Activated CD4-positive, alpha-beta T cell treated with anti-CD3 and anti-CD28 coated beads, Interleukin-2, amount 10 ng/mL, durations not matched to agents 24 days and 14 days (primary cell): ENCODE measurements at regions of chr2 and their contacts with region 1.

Region 1: GRCh38 chr2:73926493-73927338 is at the start of gene DGUOK:
- DNase-seq: peak; percentile 99
- H3K4me3 Mint-ChIP-seq: peak within 1 kb of the TSS; percentile 93
- H3K27ac Mint-ChIP-seq: peak within 1 kb of the TSS; percentile 96
- H3K4me1 Mint-ChIP-seq: peaks cover 50% of the 10 kb centered on the region
- H3K27me3 Mint-ChIP-seq: no peaks in the 10 kb centered on the region
- total RNA-seq, gene DGUOK: 88.9 and 94.9 TPM in 2 replicates

Region 2: DNA sequence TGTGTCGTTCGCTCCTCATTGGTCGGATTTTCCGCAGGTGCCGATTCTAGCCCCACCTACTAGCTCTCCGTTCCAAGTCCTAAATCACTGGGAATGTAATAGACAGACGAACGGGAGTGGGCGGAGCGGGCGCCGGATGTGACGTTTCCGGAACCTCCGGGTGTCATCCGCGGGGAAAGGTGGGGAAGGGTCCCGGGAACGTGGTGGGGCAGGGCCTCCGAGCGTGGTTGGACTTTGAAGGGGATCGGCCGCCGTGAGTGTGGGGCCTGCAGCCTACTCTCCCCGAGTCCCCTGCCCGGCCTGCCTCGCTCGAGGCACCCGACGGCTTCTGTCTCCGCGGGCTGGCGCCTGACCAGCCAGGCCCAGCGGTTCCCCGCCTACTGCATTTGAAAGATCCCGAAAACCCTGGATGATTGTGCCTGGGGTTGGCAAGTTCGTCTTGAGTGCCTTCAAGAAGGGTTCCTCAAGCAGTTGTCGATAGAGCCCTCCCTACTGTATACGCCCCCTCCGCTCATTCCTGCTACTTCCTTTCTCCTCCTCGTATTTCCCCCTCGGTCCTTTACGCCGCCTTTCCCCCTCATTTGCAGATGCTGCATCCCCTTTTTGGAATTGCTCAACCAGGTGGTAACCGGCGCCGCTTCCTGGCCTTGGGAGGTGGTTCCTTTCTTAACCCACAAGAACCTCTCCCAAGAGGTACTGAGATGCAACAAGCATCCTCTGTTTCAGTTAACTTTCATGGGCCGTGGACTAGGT is 97.7 kb before region 1 on chr2 and contains the start of gene STAMBP:
- intact Hi-C with region 1: loop called (anchors 1 kb)
- DNase-seq: peak; percentile 98
- H3K4me3 Mint-ChIP-seq: peak within 1 kb of the TSS; percentile 97
- H3K27ac Mint-ChIP-seq: peak within 1 kb of the TSS; percentile 96
- H3K4me1 Mint-ChIP-seq: peaks cover 44% of the 10 kb centered on the region
- H3K27me3 Mint-ChIP-seq: peaks cover 2% of the 10 kb centered on the region
- total RNA-seq, gene STAMBP: 58.4 and 59.9 TPM in 2 replicates

Region 3: DNA sequence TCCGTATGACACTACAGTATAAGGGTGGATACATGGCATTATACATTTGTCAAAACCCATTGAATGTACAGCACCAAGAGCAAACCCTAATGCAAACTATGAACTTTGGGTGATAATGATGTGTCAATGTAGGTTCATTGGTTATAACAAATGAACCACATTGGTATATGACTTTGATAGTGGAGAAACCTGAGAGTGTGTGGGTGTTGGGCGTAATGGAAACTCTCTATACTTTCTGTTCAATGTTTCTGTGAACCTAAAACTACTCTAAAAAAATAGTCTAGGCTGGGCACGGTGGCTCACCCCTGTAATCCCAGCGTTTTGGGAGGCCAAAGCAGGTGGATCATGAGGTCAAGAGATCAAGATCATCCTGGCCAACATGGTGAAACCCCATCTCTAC is 40.4 kb before region 1 on chr2:
- intact Hi-C with region 1: loop called (anchors 2 kb)
- DNase-seq: no peak
- H3K4me3 Mint-ChIP-seq: peak overlapping the region; percentile 12
- H3K27ac Mint-ChIP-seq: peak overlapping the region; percentile 82
- H3K4me1 Mint-ChIP-seq: peaks cover 24% of the 10 kb centered on the region
- H3K27me3 Mint-ChIP-seq: peaks cover 3% of the 10 kb centered on the region

Region 4: DNA sequence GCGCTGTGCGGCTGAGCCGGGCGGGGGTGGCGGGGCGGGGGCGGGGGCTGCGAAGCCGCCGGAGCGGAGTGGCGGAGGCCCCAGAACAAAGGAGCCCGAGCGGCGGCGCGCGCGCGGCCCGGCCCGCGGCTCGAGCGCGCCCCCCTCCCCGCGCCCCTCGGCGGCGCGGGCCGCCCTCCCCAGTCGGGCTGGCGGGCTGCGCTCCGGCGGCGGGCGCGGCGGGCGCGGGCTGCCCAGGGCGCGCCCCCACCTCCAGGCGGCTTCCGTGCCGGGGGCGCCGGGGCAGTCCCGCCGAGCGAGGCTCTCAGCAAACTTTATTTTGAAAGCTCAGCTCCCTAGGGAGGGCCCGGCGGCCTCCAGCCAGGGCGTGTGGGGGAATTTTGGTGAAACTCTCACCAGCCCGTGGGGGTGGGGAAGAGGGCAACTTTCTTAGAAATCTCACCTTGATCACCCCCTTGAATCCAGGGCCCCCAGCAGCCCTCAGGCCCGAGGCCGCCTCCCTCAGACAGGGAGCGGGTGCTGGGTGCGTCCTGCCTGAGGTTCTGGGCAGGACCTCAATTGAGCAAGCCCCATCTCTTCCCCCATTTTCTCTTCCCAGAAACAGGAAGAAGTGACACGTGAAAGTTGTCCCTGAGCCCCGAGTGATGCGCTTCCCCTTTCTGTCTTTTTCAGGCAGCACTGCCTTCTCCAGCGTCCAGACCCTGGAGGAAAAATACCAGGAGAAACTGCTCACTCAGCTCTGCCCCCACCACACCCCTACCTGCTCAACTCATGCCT is 58.8 kb after region 1 on chr2:
- intact Hi-C with region 1: loop called (anchors 1 kb)
- DNase-seq: peak; percentile 83
- H3K4me3 Mint-ChIP-seq: peak overlapping the region; percentile 87
- H3K27ac Mint-ChIP-seq: peak overlapping the region; percentile 88
- H3K4me1 Mint-ChIP-seq: peaks cover 73% of the 10 kb centered on the region
- H3K27me3 Mint-ChIP-seq: peaks cover 9% of the 10 kb centered on the region

Region 5: DNA sequence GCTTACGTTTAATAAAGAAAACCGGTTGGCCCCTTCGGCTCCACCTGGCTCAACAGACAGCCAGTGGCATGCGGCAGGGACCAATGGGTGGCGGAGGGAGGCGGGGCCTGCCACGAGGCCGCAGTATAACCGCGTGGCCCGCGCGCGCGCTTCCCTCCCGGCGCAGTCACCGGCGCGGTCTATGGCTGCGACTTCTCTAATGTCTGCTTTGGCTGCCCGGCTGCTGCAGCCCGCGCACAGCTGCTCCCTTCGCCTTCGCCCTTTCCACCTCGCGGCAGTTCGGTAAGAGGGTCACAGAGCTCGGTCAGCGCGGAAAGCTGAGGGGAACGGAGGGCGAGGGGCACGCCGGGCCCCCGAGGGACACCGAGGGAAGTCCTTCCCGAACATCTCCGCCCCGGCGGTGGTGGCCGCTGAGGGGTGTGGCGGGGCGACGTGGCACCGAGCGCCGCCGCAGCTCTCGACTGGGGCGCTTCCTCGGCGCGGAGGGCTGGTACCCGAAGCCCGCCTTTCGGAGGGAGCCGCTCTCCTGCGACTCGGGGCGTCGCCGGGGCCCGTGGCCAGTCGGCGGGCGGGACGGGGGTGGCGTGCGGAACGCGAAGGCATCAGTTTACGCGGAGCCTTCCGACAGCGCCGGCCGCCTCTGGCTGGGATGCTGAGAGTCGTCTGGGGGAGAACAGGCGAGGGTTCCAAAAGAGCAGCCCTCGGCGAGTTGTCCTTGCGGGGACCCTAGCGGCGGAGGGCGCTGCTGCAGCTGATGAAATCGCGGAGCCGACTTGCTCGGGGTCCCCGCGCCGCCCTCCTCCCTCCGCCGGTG is 272.0 kb after region 1 on chr2 and contains the start of gene MTHFD2:
- intact Hi-C with region 1: loop called (anchors 5 kb)
- DNase-seq: peak; percentile 98
- H3K4me3 Mint-ChIP-seq: peak within 1 kb of the TSS; percentile 96
- H3K27ac Mint-ChIP-seq: peak within 1 kb of the TSS; percentile 100
- H3K4me1 Mint-ChIP-seq: peaks cover 38% of the 10 kb centered on the region
- H3K27me3 Mint-ChIP-seq: no peaks in the 10 kb centered on the region
- total RNA-seq, gene MTHFD2: 418 and 439 TPM in 2 replicates